Endothelial cell of umbilical vein (primary cell): ENCODE measurements at regions of chr2 and their contacts with region 1.

Region 1: GRCh38 chr2:15636972-15637785 is 45.5 kb downstream of the DDX1 start:
- DNase-seq: peak; percentile 85
- H3K4me3 ChIP-seq: no peak overlapping the region
- H3K27ac ChIP-seq: peak overlapping the region; percentile 2
- H3K4me1 ChIP-seq: peaks cover 62% of the 10 kb centered on the region
- H3K27me3 ChIP-seq: no peaks in the 10 kb centered on the region
- CTCF ChIP-seq: peak; percentile 75 to 95
- POLR2A ChIP-seq: no peak

Region 2: DNA sequence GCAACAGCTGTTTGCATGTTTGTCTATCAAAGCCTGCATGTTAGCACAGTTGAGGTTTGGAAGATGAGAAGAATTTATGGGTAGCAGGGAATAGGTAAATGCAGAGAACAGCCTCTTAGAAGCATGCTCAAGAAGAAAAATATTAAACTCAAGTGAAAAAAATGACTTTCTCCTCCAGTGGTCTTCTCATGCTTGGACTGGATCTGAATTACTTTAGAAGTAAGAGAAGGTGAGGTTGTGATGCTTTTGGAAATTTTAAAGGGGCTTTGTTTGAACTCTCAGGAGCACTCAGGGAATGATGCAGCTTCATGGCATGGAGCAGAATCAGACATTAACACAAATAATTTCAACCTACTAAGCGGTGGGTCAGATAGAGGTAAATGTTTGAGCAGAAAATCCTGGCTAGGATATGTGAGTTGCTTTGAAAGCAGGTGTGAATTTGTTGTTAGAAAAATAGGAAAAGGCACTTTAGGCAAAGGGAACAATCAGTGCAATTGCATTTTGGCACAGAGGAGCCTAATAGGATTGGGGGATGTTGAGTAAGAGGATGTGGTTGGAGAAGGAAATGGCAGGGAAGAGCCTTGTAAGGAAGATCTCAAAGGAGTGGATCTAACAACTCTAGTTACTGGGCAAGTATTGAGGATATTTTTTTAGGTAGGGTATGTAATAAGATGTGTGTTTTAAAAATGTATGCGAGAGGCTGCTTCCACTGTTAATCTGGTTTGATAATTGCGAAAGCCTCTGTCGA is 30.8 kb after region 1 on chr2:
- CTCF ChIA-PET with region 1: no interaction called
- POLR2A ChIA-PET with region 1: no interaction called
- dilution Hi-C with region 1: no loop called
- intact Hi-C with region 1: loop called (anchors 2 kb)
- DNase-seq: peak; percentile 39
- H3K4me3 ChIP-seq: no peak overlapping the region
- H3K27ac ChIP-seq: peak overlapping the region; percentile 72
- H3K4me1 ChIP-seq: peaks cover 24% of the 10 kb centered on the region
- H3K27me3 ChIP-seq: no peaks in the 10 kb centered on the region
- CTCF ChIP-seq: no peak
- POLR2A ChIP-seq: no peak

Region 3: GRCh38 chr2:15693926-15694588 is 56.9 kb after region 1 on chr2:
- CTCF ChIA-PET with region 1: no interaction called
- POLR2A ChIA-PET with region 1: no interaction called
- dilution Hi-C with region 1: no loop called
- intact Hi-C with region 1: no loop called
- DNase-seq: no peak
- H3K4me3 ChIP-seq: no peak overlapping the region
- H3K27ac ChIP-seq: no peak overlapping the region
- H3K4me1 ChIP-seq: no peaks in the 10 kb centered on the region
- H3K27me3 ChIP-seq: no peaks in the 10 kb centered on the region
- CTCF ChIP-seq: no peak
- POLR2A ChIP-seq: no peak

Region 4: GRCh38 chr2:15730545-15731212 is 93.5 kb after region 1 on chr2:
- CTCF ChIA-PET with region 1: interaction called, 5 read pairs
- POLR2A ChIA-PET with region 1: no interaction called
- dilution Hi-C with region 1: no loop called
- intact Hi-C with region 1: loop called (anchors 1 kb)
- DNase-seq: peak; percentile 97
- H3K4me3 ChIP-seq: no peak overlapping the region
- H3K27ac ChIP-seq: peak overlapping the region; percentile 24
- H3K4me1 ChIP-seq: peaks cover 31% of the 10 kb centered on the region
- H3K27me3 ChIP-seq: peaks cover 0 to 1% of the 10 kb centered on the region in 2 experiments
- CTCF ChIP-seq: no peak
- POLR2A ChIP-seq: peak; percentile 24

Region 5: DNA sequence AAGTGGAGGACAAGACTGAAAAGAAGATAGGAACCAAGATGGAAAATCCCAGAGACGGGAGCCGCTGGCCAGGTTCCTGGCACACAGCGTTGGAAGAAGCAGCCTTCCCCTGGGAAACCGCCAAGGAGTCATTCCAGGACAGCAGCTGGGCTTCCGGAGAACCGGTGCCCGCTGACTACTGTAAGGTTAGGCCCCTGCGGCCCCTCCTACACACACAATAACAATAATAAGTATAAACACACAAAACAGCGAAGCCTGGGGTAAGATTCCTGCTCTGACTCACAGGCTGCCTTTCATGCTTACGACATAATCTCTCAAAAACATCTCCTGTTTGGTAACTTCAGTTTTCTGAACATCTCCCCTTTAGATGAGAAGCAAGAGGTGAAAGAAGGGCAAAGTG is 275.0 kb after region 1 on chr2:
- CTCF ChIA-PET with region 1: interaction called, 3 read pairs
- POLR2A ChIA-PET with region 1: no interaction called
- dilution Hi-C with region 1: no loop called
- intact Hi-C with region 1: loop called (anchors 1 kb)
- DNase-seq: peak; percentile 88
- H3K4me3 ChIP-seq: no peak overlapping the region
- H3K27ac ChIP-seq: no peak overlapping the region
- H3K4me1 ChIP-seq: no peaks in the 10 kb centered on the region
- H3K27me3 ChIP-seq: no peaks in the 10 kb centered on the region
- CTCF ChIP-seq: no peak
- POLR2A ChIP-seq: no peak

Region 6: GRCh38 chr2:16487686-16488085 is 850.5 kb after region 1 on chr2:
- CTCF ChIA-PET with region 1: interaction called, 19 read pairs
- POLR2A ChIA-PET with region 1: no interaction called
- dilution Hi-C with region 1: no loop called
- intact Hi-C with region 1: loop called (anchors 1 kb)
- DNase-seq: peak; percentile 46
- H3K4me3 ChIP-seq: no peak overlapping the region
- H3K27ac ChIP-seq: no peak overlapping the region
- H3K4me1 ChIP-seq: no peaks in the 10 kb centered on the region
- H3K27me3 ChIP-seq: no peaks in the 10 kb centered on the region
- CTCF ChIP-seq: peak; percentile 21 to 42
- POLR2A ChIP-seq: no peak

Region 7: DNA sequence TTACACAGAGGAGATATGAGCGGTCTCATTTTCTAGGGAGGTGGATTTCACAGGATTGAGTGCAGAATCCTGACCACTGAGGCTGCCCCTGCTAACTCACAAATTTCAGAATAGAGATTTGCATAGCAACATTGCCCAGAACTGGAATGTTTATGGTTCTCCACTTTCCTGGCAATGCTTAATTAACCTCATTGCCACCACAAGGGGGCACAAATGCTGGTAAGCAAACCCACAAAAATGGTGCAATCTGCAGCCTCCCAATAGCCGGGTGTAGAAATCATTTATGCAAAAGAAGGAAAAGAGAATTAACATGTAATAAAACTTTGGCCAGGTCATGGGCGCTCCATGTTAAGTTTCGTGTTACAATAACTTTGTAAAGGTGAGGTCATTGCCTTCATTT is 916.0 kb after region 1 on chr2:
- CTCF ChIA-PET with region 1: no interaction called
- POLR2A ChIA-PET with region 1: no interaction called
- dilution Hi-C with region 1: no loop called
- intact Hi-C with region 1: loop called (anchors 2 kb)
- DNase-seq: peak; percentile 51
- H3K4me3 ChIP-seq: no peak overlapping the region
- H3K27ac ChIP-seq: no peak overlapping the region
- H3K4me1 ChIP-seq: no peaks in the 10 kb centered on the region
- H3K27me3 ChIP-seq: no peaks in the 10 kb centered on the region
- CTCF ChIP-seq: peak; percentile 66 to 71
- POLR2A ChIP-seq: no peak

Region 8: GRCh38 chr2:16756831-16757644 is 1119.9 kb after region 1 on chr2:
- CTCF ChIA-PET with region 1: interaction called, 7 read pairs
- POLR2A ChIA-PET with region 1: no interaction called
- dilution Hi-C with region 1: no loop called
- intact Hi-C with region 1: loop called (anchors 5 kb)
- DNase-seq: peak; percentile 67
- H3K4me3 ChIP-seq: no peak overlapping the region
- H3K27ac ChIP-seq: no peak overlapping the region
- H3K4me1 ChIP-seq: no peaks in the 10 kb centered on the region
- H3K27me3 ChIP-seq: peaks cover 0 to 2% of the 10 kb centered on the region in 2 experiments
- CTCF ChIP-seq: peak; percentile 78 to 84
- POLR2A ChIP-seq: no peak